ENCODE measurements at regions of chr6 and their contacts with region 1.

Region 1: GRCh38 chr6:43286980-43287716 is 10.9 kb upstream of the SLC22A7 start:
- DNase-seq: peak; percentile 71
- ATAC-seq: peak; percentile 57
- H3K4me3 ChIP-seq: peak overlapping the region in 1 of 3 experiments; percentile 42; a peak in 1 of 6 replicates
- H3K27ac ChIP-seq: peak overlapping the region; percentile 72
- H3K4me1 ChIP-seq: peaks cover 74% of the 10 kb centered on the region
- H3K27me3 ChIP-seq: no peaks in the 10 kb centered on the region
- CTCF ChIP-seq: peak; percentile 74
- EP300 ChIP-seq: 0 out of 4 replicates have a peak, but pooled peaks of 1 of the 2 experiments have one; percentile 2
- POLR2A ChIP-seq: no peak
- RAD21 ChIP-seq: peak; percentile 87

Region 2: GRCh38 chr6:43269273-43270007 is 17.7 kb before region 1 on chr6:
- CTCF ChIA-PET with region 1: interaction called, 23 read pairs
- POLR2A ChIA-PET with region 1: interaction called, 314 read pairs
- in situ Hi-C with region 1: no loop called
- intact Hi-C with region 1: loop called (anchors 2 kb)
- DNase-seq: no peak
- ATAC-seq: no peak
- H3K4me3 ChIP-seq: no peak overlapping the region
- H3K27ac ChIP-seq: peak overlapping the region; percentile 91
- H3K4me1 ChIP-seq: peaks cover 99% of the 10 kb centered on the region
- H3K27me3 ChIP-seq: no peaks in the 10 kb centered on the region
- CTCF ChIP-seq: no peak
- EP300 ChIP-seq: no peak
- POLR2A ChIP-seq: no peak
- RAD21 ChIP-seq: no peak

Region 3: DNA sequence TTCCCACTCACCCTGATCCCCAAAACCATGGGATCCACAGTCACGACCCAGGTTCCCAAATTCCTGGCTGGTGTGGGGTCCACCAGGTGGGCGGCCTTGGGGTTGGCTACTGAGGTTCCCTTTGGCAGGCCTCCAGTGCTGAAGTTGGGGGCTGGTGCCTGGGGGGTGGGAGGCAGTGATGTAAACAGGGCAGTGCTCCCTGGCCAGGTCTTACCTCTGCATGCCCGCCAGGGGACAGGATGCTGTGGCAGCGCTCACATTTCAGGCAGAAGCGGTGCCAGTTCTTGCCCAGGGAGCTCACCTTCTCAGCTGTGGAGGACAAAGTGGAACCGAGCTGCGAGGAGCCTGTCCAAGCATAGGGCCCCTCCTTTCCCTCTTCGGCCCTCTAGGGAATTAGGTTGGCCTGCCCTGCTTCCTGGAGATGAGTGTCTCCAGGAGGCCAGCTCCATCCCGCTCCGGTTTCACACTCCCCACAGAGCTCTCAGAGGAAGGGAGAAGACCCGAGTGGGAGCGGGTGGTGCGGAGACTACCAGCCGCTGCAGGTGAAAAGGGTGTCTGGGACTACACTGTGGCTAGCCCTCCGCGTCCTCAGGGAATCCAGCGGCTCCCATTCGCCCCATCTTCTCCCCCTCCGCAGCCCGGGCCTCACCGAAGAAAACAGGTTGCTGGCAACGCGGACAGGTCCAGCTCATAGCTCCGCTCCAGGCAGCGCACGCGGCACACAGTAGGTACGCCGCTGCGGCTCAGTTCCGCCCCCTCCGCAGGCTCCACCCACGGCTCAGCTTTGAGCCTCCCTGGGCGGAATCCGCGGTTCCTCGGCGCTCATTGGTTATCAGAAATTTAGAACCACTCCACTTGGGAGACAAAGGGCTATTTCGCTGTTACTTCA is 21.2 kb after region 1 on chr6 and contains the start of gene CRIP3:
- CTCF ChIA-PET with region 1: no interaction called
- POLR2A ChIA-PET with region 1: interaction called, 8 read pairs
- in situ Hi-C with region 1: no loop called
- intact Hi-C with region 1: loop called (anchors 2 kb)
- DNase-seq: no peak
- ATAC-seq: peak; percentile 69
- H3K4me3 ChIP-seq: peak within 1 kb of the TSS; percentile 38 to 70 (median 43)
- H3K27ac ChIP-seq: no peak within 1 kb of the TSS
- H3K4me1 ChIP-seq: peaks cover 43% of the 10 kb centered on the region
- H3K27me3 ChIP-seq: no peaks in the 10 kb centered on the region
- CTCF ChIP-seq: 0 out of 2 replicates have a peak, but pooled peaks have one; percentile 1
- EP300 ChIP-seq: no peak
- POLR2A ChIP-seq: peak in 1 of 2 experiments; percentile 23; a peak in 2 of 4 replicates
- RAD21 ChIP-seq: 0 out of 2 replicates have a peak, but pooled peaks have one; percentile 17
- total RNA-seq, gene CRIP3: 3.5 and 6.3 TPM in 2 replicates

Region 4: DNA sequence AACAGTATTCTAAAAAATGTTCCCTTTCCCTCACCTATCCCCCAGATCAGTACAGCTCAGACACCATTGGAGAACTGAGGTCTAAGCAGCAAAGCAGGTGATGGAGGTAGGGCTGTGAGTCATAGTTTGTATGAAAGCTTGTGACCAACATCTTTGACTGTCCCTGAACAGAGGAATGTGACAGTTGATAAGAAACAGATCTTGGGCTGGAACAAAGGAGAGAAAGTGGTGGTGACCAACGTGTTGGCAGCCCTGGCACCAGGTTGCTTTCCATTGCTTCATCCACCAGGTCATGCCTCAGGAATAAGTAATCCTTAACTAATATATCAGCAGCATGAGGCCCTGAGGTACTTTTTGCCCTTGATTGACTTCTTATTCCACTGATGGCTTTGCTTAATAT is 41.4 kb after region 1 on chr6:
- CTCF ChIA-PET with region 1: no interaction called
- POLR2A ChIA-PET with region 1: no interaction called
- in situ Hi-C with region 1: no loop called
- intact Hi-C with region 1: loop called (anchors 2 kb)
- DNase-seq: peak; percentile 62
- ATAC-seq: peak; percentile 84
- H3K4me3 ChIP-seq: peak overlapping the region in 2 of 3 experiments; percentile 9 to 21; a peak in 2 of 6 replicates
- H3K27ac ChIP-seq: no peak overlapping the region
- H3K4me1 ChIP-seq: peaks cover 17% of the 10 kb centered on the region
- H3K27me3 ChIP-seq: no peaks in the 10 kb centered on the region
- CTCF ChIP-seq: no peak
- EP300 ChIP-seq: no peak
- POLR2A ChIP-seq: no peak
- RAD21 ChIP-seq: no peak